Naive thymus-derived CD8-positive, alpha-beta T cell (primary cell): ENCODE measurements at regions of chr19 and their contacts with region 1.

Region 1: GRCh38 chr19:14147797-14148605 is 11.6 kb upstream of the ASF1B start:
- DNase-seq: peak; percentile 27 to 72 (median 52)
- ATAC-seq: peak; percentile 51 to 54
- H3K4me3 Mint-ChIP-seq: peak overlapping the region; percentile 50 to 94 (median 68)
- H3K27ac Mint-ChIP-seq: peak overlapping the region; percentile 93 to 100 (median 98)
- H3K4me1 Mint-ChIP-seq: peaks cover 20 to 38% (median 36%) of the 10 kb centered on the region in 4 donors
- H3K27me3 Mint-ChIP-seq: no peaks in the 10 kb centered on the region

Region 2: DNA sequence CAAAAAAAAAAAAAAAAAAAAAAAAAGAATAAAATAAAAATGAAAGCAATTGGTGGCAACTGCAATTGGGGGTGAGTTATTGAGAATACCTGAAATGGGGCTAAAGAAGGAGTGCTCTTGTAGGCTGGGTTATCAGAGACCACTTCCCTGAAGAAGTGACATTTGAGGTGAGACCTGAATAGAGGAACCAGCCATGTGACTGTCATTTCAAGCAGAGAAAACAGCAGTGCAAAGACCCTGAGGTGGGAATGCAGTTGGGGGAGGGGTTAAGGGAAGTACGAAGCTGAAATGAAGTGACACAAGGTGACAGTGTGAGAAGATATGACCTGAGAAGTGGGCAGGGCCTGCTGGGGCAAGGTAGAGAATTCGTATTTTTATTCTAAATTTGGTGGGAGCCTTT is 81.9 kb before region 1 on chr19:
- POLR2A ChIA-PET with region 1: interaction called, 11 read pairs
- DNase-seq: no peak
- ATAC-seq: peak; percentile 16 to 35
- H3K4me3 Mint-ChIP-seq: no peak overlapping the region
- H3K27ac Mint-ChIP-seq: peak overlapping the region in 1 of 10 donors; percentile 36
- H3K4me1 Mint-ChIP-seq: peaks cover 0 to 2% (median 0%) of the 10 kb centered on the region in 4 donors
- H3K27me3 Mint-ChIP-seq: peaks cover 2 to 6% (median 5%) of the 10 kb centered on the region in 5 donors

Region 3: GRCh38 chr19:14167576-14168138 is 19.7 kb after region 1 on chr19:
- POLR2A ChIA-PET with region 1: interaction called, 33 read pairs
- DNase-seq: peak in 6 of 10 donors; percentile 17 to 42 (median 30)
- ATAC-seq: peak; percentile 77 to 83
- H3K4me3 Mint-ChIP-seq: peak overlapping the region; percentile 76 to 93 (median 89)
- H3K27ac Mint-ChIP-seq: peak overlapping the region; percentile 74 to 97 (median 92)
- H3K4me1 Mint-ChIP-seq: peaks cover 20 to 33% (median 25%) of the 10 kb centered on the region in 4 donors
- H3K27me3 Mint-ChIP-seq: no peaks in the 10 kb centered on the region